Esophagus muscularis mucosa (tissue), 4 donors: ENCODE measurements at regions of chr14 and their contacts with region 1.

Region 1: DNA sequence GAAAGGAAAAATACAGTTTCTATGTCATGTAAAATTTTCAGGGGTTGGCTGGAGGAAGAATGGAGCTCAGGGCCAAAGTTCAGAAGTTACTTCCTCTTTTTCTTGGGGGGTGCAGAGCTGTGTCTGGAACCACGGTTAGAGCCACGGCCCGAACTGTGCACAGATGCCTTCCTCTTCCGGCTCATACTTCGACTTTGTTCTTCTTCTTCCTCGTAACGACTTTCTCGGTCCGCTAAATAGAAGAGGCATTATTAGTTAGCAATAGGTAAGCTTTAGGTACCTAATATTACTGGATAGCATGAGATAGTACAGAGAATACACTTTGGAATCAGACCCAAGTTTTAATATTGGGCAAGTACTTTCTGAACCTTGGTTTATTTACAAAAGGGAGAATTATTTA is 31.2 kb downstream of the SUPT16H start:
- DNase-seq: no peak
- H3K4me3 ChIP-seq: no peak overlapping the region
- H3K27ac ChIP-seq: no peak overlapping the region
- H3K4me1 ChIP-seq: no peaks in the 10 kb centered on the region
- H3K27me3 ChIP-seq: no peaks in the 10 kb centered on the region
- CTCF ChIP-seq: no peak
- EP300 ChIP-seq: no peak
- POLR2A ChIP-seq: no peak

Region 2: GRCh38 chr14:21408147-21408546 is 55.6 kb after region 1 on chr14:
- intact Hi-C with region 1: loop called (anchors 10 kb)
- DNase-seq: no peak
- H3K4me3 ChIP-seq: no peak overlapping the region
- H3K27ac ChIP-seq: no peak overlapping the region
- H3K4me1 ChIP-seq: no peaks in the 10 kb centered on the region
- H3K27me3 ChIP-seq: no peaks in the 10 kb centered on the region
- CTCF ChIP-seq: no peak
- EP300 ChIP-seq: no peak
- POLR2A ChIP-seq: no peak